AG04450 (cell line): ENCODE measurements at regions of chr14 and their contacts with region 1.

Region 1: GRCh38 chr14:96275177-96276112 is 19.4 kb downstream of the BDKRB1 start:
- DNase-seq: peak; percentile 83
- H3K4me3 ChIP-seq: no peak overlapping the region
- H3K27ac ChIP-seq: peak overlapping the region; percentile 97
- H3K27me3 ChIP-seq: no peaks in the 10 kb centered on the region
- CTCF ChIP-seq: peak; percentile 98

Region 2: GRCh38 chr14:95993768-95994592 is 281.5 kb before region 1 on chr14:
- CTCF ChIA-PET with region 1: interaction called, 13 read pairs
- POLR2A ChIA-PET with region 1: no interaction called
- DNase-seq: peak; percentile 18
- H3K4me3 ChIP-seq: no peak overlapping the region
- H3K27ac ChIP-seq: no peak overlapping the region
- H3K27me3 ChIP-seq: peaks cover 16% of the 10 kb centered on the region
- CTCF ChIP-seq: peak; percentile 81

Region 3: GRCh38 chr14:96246535-96246839 is 29.0 kb before region 1 on chr14:
- CTCF ChIA-PET with region 1: interaction called, 10 read pairs
- POLR2A ChIA-PET with region 1: interaction called, 5 read pairs
- DNase-seq: peak; percentile 94
- H3K4me3 ChIP-seq: no peak overlapping the region
- H3K27ac ChIP-seq: peak overlapping the region; percentile 93
- H3K27me3 ChIP-seq: no peaks in the 10 kb centered on the region
- CTCF ChIP-seq: no peak

Region 4: GRCh38 chr14:96252999-96253539 is 22.4 kb before region 1 on chr14:
- CTCF ChIA-PET with region 1: interaction called, 11 read pairs
- POLR2A ChIA-PET with region 1: interaction called, 12 read pairs
- DNase-seq: peak; percentile 93
- H3K4me3 ChIP-seq: no peak overlapping the region
- H3K27ac ChIP-seq: peak overlapping the region; percentile 96
- H3K27me3 ChIP-seq: no peaks in the 10 kb centered on the region
- CTCF ChIP-seq: no peak

Region 5: DNA sequence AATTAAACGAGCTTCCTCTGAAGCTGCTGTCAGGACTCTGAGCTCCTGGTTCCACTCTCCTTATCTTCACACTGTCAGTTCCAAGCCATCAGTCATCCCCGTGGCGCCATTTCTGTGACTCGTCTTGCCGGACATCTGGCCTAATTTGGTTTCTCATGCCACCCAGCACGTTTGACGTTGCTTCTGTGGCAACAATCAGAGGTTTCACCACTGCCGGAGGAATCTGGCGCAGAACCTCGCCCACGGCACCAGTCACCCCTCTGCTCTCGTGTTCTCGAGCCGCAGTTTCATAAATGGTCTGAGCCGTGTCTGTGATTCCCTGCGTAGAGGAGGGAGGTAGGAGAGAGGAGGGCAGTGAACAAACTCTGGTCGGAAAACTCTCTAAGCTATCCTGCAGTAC is 10.2 kb after region 1 on chr14:
- CTCF ChIA-PET with region 1: interaction called, 22 read pairs
- POLR2A ChIA-PET with region 1: no interaction called
- DNase-seq: no peak
- H3K4me3 ChIP-seq: peak overlapping the region; percentile 5
- H3K27ac ChIP-seq: no peak overlapping the region
- H3K27me3 ChIP-seq: no peaks in the 10 kb centered on the region
- CTCF ChIP-seq: no peak

Region 6: GRCh38 chr14:96297000-96297399 is 21.6 kb after region 1 on chr14:
- CTCF ChIA-PET with region 1: interaction called, 22 read pairs
- POLR2A ChIA-PET with region 1: interaction called, 3 read pairs
- DNase-seq: no peak
- H3K4me3 ChIP-seq: no peak overlapping the region
- H3K27ac ChIP-seq: no peak overlapping the region
- H3K27me3 ChIP-seq: no peaks in the 10 kb centered on the region
- CTCF ChIP-seq: peak; percentile 59

Region 7: GRCh38 chr14:96735526-96735925 is 460.1 kb after region 1 on chr14:
- CTCF ChIA-PET with region 1: no interaction called
- POLR2A ChIA-PET with region 1: no interaction called
- DNase-seq: no peak
- H3K4me3 ChIP-seq: no peak overlapping the region
- H3K27ac ChIP-seq: no peak overlapping the region
- H3K27me3 ChIP-seq: peaks cover 43% of the 10 kb centered on the region
- CTCF ChIP-seq: no peak